Psoas muscle (tissue), 8 donors: ENCODE measurements at regions of chr10 and their contacts with region 1.

Region 1: GRCh38 chr10:122435212-122435827 is 19.1 kb upstream of the ARMS2 start:
- DNase-seq: no peak
- ATAC-seq: peak in 2 of 4 donors; percentile 53 to 75
- H3K4me3 ChIP-seq: no peak overlapping the region
- H3K27ac ChIP-seq: no peak overlapping the region
- H3K4me1 ChIP-seq: no peaks in the 10 kb centered on the region
- H3K27me3 ChIP-seq: no peaks in the 10 kb centered on the region
- CTCF ChIP-seq: peak; percentile 76

Region 2: GRCh38 chr10:122279725-122280141 is 155.6 kb before region 1 on chr10:
- intact Hi-C with region 1: loop called in 1 of 2 experiments (anchors 1 kb)
- DNase-seq: peak in 1 of 2 donors; percentile 70
- ATAC-seq: peak; percentile 69 to 87 (median 80)
- H3K4me3 ChIP-seq: no peak overlapping the region
- H3K27ac ChIP-seq: peak overlapping the region; percentile 62
- H3K4me1 ChIP-seq: peaks cover 20% of the 10 kb centered on the region
- H3K27me3 ChIP-seq: no peaks in the 10 kb centered on the region
- CTCF ChIP-seq: peak; percentile 77

Region 3: GRCh38 chr10:122298598-122299301 is 136.6 kb before region 1 on chr10:
- intact Hi-C with region 1: loop called (anchors 1 to 2 kb)
- DNase-seq: peak; percentile 71 to 80
- ATAC-seq: peak; percentile 80 to 95 (median 86)
- H3K4me3 ChIP-seq: no peak overlapping the region
- H3K27ac ChIP-seq: no peak overlapping the region
- H3K4me1 ChIP-seq: peaks cover 3% of the 10 kb centered on the region
- H3K27me3 ChIP-seq: peaks cover 0 to 1% (median 0%) of the 10 kb centered on the region in 3 donors
- CTCF ChIP-seq: peak; percentile 91

Region 4: GRCh38 chr10:122342293-122343134 is 92.8 kb before region 1 on chr10:
- intact Hi-C with region 1: loop called (anchors 2 to 5 kb)
- DNase-seq: no peak
- ATAC-seq: peak; percentile 42 to 72 (median 52)
- H3K4me3 ChIP-seq: no peak overlapping the region
- H3K27ac ChIP-seq: no peak overlapping the region
- H3K4me1 ChIP-seq: peaks cover 8% of the 10 kb centered on the region
- H3K27me3 ChIP-seq: no peaks in the 10 kb centered on the region
- CTCF ChIP-seq: peak; percentile 73